ENCODE measurements at regions of chr2 and their contacts with region 1.

Region 1: DNA sequence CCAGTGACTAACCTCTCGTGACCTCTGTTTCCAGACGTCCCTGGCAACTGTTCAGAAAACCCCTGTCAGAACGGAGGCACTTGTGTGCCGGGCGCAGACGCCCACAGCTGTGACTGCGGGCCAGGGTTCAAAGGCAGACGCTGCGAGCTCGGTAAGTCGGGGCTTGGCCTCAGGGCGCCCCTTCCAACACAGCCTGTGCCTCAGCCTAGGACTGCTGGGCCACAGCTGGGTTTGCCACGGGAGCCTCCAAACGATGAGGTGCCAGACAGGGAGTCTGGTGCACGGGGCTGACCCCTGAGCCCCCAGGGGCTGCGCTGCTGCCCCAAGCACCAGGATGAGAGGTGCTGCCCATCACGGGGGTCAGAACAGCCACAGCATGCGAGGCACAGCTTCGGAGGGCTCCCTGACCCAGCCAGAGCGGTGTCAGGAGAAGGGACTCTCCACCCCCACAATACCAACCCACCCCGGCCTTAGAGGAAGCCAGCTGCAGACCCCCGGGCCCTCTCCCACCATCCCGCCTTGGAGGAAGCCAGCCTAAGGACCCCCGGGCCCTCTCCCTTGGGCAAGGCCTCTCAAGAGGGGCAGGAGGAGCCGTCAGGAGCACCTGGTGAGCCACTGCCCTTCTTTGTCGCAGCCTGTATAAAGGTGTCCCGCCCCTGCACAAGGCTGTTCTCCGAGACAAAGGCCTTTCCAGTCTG is 20.3 kb downstream of the MTERF4 start:
- DNase-seq: no peak
- H3K4me3 ChIP-seq: no peak overlapping the region
- H3K27ac ChIP-seq: no peak overlapping the region
- H3K4me1 ChIP-seq: no peaks in the 10 kb centered on the region
- H3K27me3 ChIP-seq: no peaks in the 10 kb centered on the region
- CTCF ChIP-seq: no peak
- POLR2A ChIP-seq: no peak

Region 2: GRCh38 chr2:240480834-240481623 is 600.8 kb before region 1 on chr2:
- CTCF ChIA-PET with region 1: no interaction called
- POLR2A ChIA-PET with region 1: no interaction called
- dilution Hi-C with region 1: no loop called
- intact Hi-C with region 1: no loop called
- DNase-seq: no peak
- H3K4me3 ChIP-seq: no peak overlapping the region
- H3K27ac ChIP-seq: no peak overlapping the region
- H3K4me1 ChIP-seq: no peaks in the 10 kb centered on the region
- H3K27me3 ChIP-seq: no peaks in the 10 kb centered on the region
- CTCF ChIP-seq: no peak
- POLR2A ChIP-seq: no peak

Region 3: DNA sequence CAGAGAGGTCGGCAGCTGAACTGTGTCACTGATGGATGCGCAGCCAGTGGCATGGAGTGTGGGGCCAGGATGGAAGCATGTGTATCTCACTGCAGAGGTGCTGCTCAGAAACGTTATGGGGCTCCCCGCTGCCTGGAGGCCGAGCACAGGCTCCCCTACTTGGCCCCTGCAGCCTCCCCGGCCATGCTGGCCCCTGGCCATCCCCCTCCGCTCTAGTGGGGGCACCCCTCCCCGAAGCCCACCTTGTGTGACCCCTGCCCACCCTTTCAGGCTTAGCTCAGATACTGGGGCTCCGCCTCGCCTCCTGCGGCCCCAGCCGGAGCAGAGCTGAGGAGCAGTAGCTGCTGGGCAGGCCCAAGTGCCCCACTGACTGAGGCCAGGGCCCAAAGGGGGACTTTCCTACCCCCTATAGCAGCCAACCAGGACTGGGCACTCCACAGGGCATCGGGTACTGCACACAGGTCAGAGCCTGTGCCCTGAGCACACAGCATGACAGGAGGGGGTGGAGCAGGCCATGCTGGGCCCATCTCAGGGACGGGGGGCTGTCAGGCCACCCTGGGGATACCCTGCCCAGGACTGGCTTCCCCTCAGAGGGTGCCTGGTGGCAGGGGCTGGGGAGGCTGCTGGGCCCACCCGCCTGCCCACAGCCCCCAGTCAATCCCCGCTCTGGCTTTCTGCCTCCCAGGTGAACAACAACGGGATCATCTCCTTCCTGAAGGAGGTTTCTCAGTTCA is 52.0 kb before region 1 on chr2:
- CTCF ChIA-PET with region 1: no interaction called
- POLR2A ChIA-PET with region 1: no interaction called
- dilution Hi-C with region 1: no loop called
- intact Hi-C with region 1: no loop called
- DNase-seq: no peak
- H3K4me3 ChIP-seq: no peak overlapping the region
- H3K27ac ChIP-seq: no peak overlapping the region
- H3K4me1 ChIP-seq: no peaks in the 10 kb centered on the region
- H3K27me3 ChIP-seq: no peaks in the 10 kb centered on the region
- CTCF ChIP-seq: no peak
- POLR2A ChIP-seq: no peak

Region 4: GRCh38 chr2:241064008-241064801 is 17.6 kb before region 1 on chr2:
- CTCF ChIA-PET with region 1: interaction called, 14 read pairs
- POLR2A ChIA-PET with region 1: no interaction called
- dilution Hi-C with region 1: no loop called
- intact Hi-C with region 1: no loop called
- DNase-seq: peak; percentile 4
- H3K4me3 ChIP-seq: no peak overlapping the region
- H3K27ac ChIP-seq: no peak overlapping the region
- H3K4me1 ChIP-seq: no peaks in the 10 kb centered on the region
- H3K27me3 ChIP-seq: no peaks in the 10 kb centered on the region
- CTCF ChIP-seq: no peak
- POLR2A ChIP-seq: no peak

Region 5: DNA sequence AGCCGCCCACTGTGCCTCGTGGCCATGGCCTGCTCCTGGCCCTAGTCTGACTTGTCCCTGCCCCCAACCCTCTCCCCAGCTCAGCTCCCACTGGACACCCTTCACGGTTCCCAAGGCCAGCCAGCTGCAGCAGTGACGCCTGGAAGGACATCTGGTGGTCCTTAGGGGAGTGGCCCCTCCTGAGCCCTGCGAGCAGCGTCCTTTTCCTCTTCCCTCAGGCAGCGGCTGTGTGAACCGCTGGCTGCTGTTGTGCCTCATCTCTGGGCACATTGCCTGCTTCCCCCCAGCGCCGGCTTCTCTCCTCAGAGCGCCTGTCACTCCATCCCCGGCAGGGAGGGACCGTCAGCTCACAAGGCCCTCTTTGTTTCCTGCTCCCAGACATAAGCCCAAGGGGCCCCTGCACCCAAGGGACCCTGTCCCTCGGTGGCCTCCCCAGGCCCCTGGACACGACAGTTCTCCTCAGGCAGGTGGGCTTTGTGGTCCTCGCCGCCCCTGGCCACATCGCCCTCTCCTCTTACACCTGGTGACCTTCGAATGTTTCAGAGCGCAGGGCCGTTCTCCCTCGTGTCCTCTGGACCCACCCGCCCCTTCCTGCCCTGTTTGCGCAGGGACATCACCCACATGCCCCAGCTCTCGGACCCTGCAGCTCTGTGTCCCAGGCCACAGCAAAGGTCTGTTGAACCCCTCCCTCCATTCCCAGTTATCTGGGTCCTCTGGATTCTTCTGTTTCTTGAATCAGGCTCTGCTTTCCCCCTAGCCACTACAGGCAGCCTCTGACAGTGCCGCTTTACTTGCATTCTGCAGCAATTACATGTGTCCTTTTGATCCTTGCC is 142.4 kb after region 1 on chr2:
- CTCF ChIA-PET with region 1: interaction called, 4 read pairs
- POLR2A ChIA-PET with region 1: no interaction called
- dilution Hi-C with region 1: no loop called
- intact Hi-C with region 1: loop called (anchors 2 kb)
- DNase-seq: peak; percentile 23
- H3K4me3 ChIP-seq: no peak overlapping the region
- H3K27ac ChIP-seq: peak overlapping the region; percentile 4
- H3K4me1 ChIP-seq: peaks cover 20% of the 10 kb centered on the region
- H3K27me3 ChIP-seq: no peaks in the 10 kb centered on the region
- CTCF ChIP-seq: peak in 1 of 2 donors; percentile 3
- POLR2A ChIP-seq: no peak